Spleen (tissue), 13 donors: ENCODE measurements at regions of chr2 and their contacts with region 1.

Region 1: GRCh38 chr2:28821295-28821958 is 10.8 kb downstream of the SPDYA start:
- DNase-seq: no peak
- H3K4me3 ChIP-seq: no peak overlapping the region
- H3K27ac ChIP-seq: no peak overlapping the region
- H3K4me1 ChIP-seq: peaks cover 0 to 6% (median 0%) of the 10 kb centered on the region in 6 donors
- H3K27me3 ChIP-seq: no peaks in the 10 kb centered on the region
- CTCF ChIP-seq: peak; percentile 28 to 78 (median 70)
- POLR2A ChIP-seq: no peak

Region 2: DNA sequence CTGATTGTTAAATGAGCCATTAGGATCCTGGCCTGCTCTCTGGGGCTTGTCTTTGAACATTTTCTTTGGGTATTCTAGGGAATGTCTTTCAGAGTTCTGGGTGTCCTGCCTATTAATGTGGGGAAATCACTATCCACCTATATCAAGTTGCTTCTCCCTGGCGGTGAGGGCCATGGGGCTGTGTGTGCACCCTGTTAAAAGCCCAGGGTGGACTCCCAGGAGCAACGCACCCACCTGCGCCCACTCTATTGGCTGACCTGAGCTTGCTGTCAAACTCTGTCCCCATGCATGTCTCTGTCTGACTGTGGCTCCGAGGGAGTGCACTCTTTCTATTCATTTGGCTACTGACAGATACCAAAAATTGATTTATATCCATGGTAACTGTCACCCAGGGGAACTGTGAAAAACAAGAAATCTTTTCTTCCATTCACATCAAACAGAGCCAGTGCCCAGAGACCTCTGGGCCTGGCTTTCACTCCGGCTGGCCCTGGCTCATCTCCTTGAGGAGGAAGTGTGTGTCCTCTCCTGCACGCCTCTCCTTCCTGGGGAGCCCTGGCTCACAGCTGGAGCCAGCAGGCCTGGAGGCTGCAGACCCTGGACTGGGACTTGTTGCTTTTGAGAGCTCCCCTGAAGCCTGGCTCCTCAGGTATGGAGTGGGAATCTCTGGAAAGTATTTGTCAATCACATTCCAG is 149.2 kb after region 1 on chr2:
- intact Hi-C with region 1: no loop called
- DNase-seq: no peak
- H3K4me3 ChIP-seq: no peak overlapping the region
- H3K27ac ChIP-seq: no peak overlapping the region
- H3K4me1 ChIP-seq: no peaks in the 10 kb centered on the region
- H3K27me3 ChIP-seq: no peaks in the 10 kb centered on the region
- CTCF ChIP-seq: no peak
- POLR2A ChIP-seq: no peak

Region 3: DNA sequence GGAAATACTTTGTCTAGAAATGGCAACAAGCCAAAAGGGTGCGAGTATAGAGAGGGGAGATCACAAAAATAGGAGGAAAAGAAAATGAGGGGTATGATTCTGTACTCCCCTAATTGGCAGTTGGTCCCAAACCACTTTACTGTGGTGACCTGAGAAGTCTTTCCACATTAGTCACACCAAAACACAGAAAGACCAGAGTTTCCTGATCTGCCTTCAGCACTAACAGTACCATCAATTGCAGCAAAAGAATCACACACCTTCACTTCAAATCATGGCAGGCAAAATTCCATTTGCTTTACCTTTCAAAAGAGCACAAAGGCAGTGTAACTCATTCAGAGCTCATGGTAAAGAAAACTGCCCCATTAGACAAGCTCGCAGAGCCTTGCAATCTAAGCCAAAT is 1013.2 kb after region 1 on chr2:
- intact Hi-C with region 1: loop called (anchors 10 kb)
- DNase-seq: no peak
- H3K4me3 ChIP-seq: no peak overlapping the region
- H3K27ac ChIP-seq: no peak overlapping the region
- H3K4me1 ChIP-seq: no peaks in the 10 kb centered on the region
- H3K27me3 ChIP-seq: peaks cover 0 to 10% (median 0%) of the 10 kb centered on the region in 7 donors
- CTCF ChIP-seq: no peak
- POLR2A ChIP-seq: no peak